Activated B cell treated with CpG ODN at 0.5 μM for 24 hours (primary cell): ENCODE measurements at regions of chr11 and their contacts with region 1.

Region 1: GRCh38 chr11:118435893-118436624 is at the start of gene KMT2A:
- DNase-seq: peak; percentile 99
- ATAC-seq: peak; percentile 65
- H3K4me3 Mint-ChIP-seq: peak within 1 kb of the TSS; percentile 94
- H3K27ac Mint-ChIP-seq: peak within 1 kb of the TSS; percentile 94
- H3K4me1 Mint-ChIP-seq: peaks cover 37% of the 10 kb centered on the region
- H3K27me3 Mint-ChIP-seq: no peaks in the 10 kb centered on the region
- CTCF ChIP-seq: no peak
- total RNA-seq, gene KMT2A: 104 and 117 TPM in 2 replicates

Region 2: DNA sequence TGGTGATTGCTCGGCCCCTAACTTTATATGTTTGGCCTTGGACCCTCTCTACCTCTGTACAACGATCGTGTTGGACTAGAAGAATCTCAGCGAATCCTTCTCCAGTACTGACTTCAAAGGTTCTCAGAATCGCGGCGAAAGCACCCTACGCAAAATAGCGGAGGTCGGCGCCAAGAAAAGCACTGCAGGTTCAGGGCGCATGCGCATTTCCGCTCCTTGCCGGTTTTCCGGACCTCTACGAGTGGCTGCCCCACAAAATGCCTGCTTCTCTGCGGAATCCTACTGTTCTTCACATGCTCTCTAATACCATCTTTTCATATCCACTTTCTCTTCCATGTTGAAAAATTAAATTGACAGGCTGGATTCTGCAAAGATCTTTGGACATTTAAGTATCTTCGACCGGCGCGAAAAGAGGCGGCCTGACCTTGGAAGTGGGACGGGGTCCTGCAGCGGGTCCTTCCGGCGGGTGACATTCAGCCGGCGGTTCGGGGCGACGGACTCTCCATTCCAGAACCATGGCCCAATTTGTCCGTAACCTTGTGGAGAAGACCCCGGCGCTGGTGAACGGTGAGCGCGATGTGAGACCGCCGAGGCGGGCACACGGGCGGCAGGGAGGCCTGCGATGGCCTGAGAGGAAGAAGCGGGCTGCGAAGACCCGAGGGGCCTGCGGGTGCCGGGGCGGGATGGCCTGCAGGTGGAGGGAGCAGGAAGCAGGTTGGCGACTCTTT is 34.7 kb before region 1 on chr11 and contains the start of gene ATP5MG:
- CTCF ChIA-PET with region 1: interaction called, 5 read pairs
- POLR2A ChIA-PET with region 1: interaction called, 30 read pairs
- intact Hi-C with region 1: loop called (anchors 1 kb)
- DNase-seq: peak; percentile 77
- ATAC-seq: peak; percentile 84
- H3K4me3 Mint-ChIP-seq: peak within 1 kb of the TSS; percentile 97
- H3K27ac Mint-ChIP-seq: peak within 1 kb of the TSS; percentile 100
- H3K4me1 Mint-ChIP-seq: peaks cover 56% of the 10 kb centered on the region
- H3K27me3 Mint-ChIP-seq: no peaks in the 10 kb centered on the region
- CTCF ChIP-seq: no peak
- total RNA-seq, gene ATP5MG: 199 and 230 TPM in 2 replicates

Region 3: DNA sequence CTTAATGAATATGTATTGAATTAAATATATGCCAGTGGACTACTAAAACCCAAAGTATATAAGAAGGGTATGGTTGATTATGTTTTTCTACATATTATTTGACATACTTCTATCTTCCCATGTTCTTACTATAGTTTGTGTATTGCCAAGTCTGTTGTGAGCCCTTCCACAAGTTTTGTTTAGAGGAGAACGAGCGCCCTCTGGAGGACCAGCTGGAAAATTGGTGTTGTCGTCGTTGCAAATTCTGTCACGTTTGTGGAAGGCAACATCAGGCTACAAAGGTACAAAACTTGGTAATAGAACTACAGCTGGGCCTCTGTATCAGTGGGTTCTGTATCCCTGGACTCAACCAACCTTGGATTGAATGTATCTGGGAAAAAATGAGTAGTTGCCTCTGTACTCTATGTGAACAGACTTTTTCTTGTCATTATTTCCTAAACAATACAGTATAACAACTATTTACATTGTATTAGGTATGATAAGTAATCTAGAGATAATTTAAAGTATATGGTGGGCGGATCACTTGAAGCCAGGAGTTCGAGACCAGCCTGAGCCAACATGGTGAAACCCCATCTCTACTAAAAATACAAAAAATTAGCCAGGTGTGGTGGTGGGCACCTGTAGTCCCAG is 52.5 kb after region 1 on chr11:
- CTCF ChIA-PET with region 1: interaction called, 4 read pairs
- POLR2A ChIA-PET with region 1: interaction called, 3 read pairs
- intact Hi-C with region 1: loop called (anchors 1 kb)
- DNase-seq: peak; percentile 46
- ATAC-seq: peak; percentile 72
- H3K4me3 Mint-ChIP-seq: no peak overlapping the region
- H3K27ac Mint-ChIP-seq: no peak overlapping the region
- H3K4me1 Mint-ChIP-seq: no peaks in the 10 kb centered on the region
- H3K27me3 Mint-ChIP-seq: no peaks in the 10 kb centered on the region
- CTCF ChIP-seq: peak; percentile 41

Region 4: DNA sequence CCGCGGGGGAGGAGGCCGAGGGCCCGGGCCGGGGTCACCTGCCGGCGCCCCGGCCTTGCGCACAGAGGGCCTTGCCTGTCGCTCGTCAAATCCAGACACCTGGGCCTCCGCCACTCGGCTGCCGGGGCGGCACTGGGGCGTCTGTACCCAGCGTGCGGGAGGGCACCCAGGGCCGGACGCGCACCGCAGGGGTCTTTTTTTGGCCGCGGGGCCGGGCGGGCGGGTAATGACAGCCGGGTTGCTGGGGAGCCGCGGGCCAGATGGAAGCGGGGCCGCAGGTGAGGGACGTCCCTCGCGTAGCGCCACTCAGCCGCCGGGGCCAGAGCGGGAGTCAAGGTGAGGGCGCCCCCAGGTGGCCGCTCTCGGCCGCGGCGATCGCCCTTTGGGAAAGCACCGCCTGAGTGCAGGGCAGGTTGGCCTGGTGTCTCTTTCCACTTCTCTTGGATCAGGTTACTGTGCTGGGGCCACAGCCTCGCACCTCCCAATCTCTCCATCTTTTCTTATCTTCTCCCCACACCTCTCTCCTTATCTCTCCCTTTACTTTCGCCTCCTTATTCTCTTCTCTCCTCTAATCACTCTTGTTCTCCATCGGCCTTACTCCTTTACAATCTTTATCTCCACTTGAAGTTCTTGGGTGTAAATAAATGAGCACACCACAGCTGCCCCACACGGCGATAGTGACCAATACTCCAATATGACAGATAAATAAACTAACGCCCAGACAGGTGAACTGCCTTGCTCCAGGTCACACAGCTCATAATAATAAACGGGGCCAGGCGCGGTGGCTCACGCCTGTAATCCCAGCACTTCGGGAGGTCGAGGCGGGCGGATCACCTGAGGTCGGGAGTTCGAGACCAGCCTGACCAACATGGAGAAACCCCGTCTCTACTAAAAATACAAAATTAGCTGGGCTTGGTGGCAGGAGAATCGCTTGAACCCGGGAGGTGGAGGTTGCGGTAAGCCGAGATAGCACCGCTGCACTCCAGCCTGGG is 175.0 kb after region 1 on chr11:
- CTCF ChIA-PET with region 1: no interaction called
- POLR2A ChIA-PET with region 1: no interaction called
- intact Hi-C with region 1: loop called (anchors 2 kb)
- DNase-seq: peak; percentile 83
- ATAC-seq: peak; percentile 59
- H3K4me3 Mint-ChIP-seq: peak overlapping the region; percentile 79
- H3K27ac Mint-ChIP-seq: no peak overlapping the region
- H3K4me1 Mint-ChIP-seq: peaks cover 26% of the 10 kb centered on the region
- H3K27me3 Mint-ChIP-seq: peaks cover 35% of the 10 kb centered on the region
- CTCF ChIP-seq: peak; percentile 46